ENCODE measurements at regions of chr2 and their contacts with region 1.

Region 1: DNA sequence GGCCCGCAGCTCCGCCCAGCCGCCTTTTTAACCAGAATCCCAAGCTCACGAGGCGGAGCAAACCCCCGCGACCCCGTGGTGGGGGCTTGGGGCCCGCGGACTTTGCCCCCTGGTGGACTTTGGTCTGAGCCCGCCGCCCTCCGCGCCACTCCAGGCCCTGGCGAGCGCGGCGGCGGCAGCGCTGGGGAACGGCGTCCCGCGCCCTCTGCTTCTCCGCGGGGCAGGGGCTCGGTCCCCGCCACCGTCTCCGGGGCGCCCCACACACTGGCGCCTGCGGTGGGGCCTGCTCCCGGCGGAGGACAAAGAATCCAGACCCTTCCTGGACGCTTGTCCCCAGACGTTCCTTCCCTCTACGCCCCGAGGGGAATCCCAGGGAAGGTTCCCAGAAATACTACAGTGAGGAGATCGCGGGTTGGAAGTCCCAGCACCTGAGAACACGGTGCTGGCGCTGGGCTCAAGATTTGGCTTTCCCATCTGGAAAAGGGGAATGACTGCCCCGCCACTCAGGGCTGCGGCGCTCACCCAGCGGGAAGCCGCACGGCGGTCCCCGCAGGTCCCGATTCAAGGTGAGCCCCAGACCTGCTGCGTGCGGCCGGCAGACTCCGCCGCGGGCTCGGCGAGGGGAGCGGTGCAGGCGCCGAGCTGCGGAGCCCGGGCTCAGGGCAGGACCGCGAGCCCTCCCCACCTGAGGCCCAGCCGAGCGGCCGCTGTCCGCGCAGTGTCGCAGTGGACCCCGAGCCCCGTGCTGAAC is at the start of gene HAAO:
- DNase-seq: peak; percentile 44
- H3K4me3 Mint-ChIP-seq: peak within 1 kb of the TSS; percentile 68
- H3K27ac Mint-ChIP-seq: no peak within 1 kb of the TSS
- H3K4me1 Mint-ChIP-seq: peaks cover 8% of the 10 kb centered on the region
- H3K27me3 Mint-ChIP-seq: peaks cover 14% of the 10 kb centered on the region
- CTCF ChIP-seq: peak; percentile 27
- total RNA-seq, gene HAAO: 1.5 and 2.2 TPM in 2 replicates

Region 2: GRCh38 chr2:42775810-42776209 is 16.9 kb before region 1 on chr2:
- CTCF ChIA-PET with region 1: interaction called, 10 read pairs
- intact Hi-C with region 1: no loop called
- DNase-seq: no peak
- H3K4me3 Mint-ChIP-seq: no peak overlapping the region
- H3K27ac Mint-ChIP-seq: no peak overlapping the region
- H3K4me1 Mint-ChIP-seq: no peaks in the 10 kb centered on the region
- H3K27me3 Mint-ChIP-seq: no peaks in the 10 kb centered on the region
- CTCF ChIP-seq: no peak

Region 3: GRCh38 chr2:42810121-42810970 is 17.6 kb after region 1 on chr2:
- CTCF ChIA-PET with region 1: interaction called, 13 read pairs
- intact Hi-C with region 1: no loop called
- DNase-seq: peak; percentile 95
- H3K4me3 Mint-ChIP-seq: peak overlapping the region; percentile 70
- H3K27ac Mint-ChIP-seq: peak overlapping the region; percentile 87
- H3K4me1 Mint-ChIP-seq: no peaks in the 10 kb centered on the region
- H3K27me3 Mint-ChIP-seq: no peaks in the 10 kb centered on the region
- CTCF ChIP-seq: no peak

Region 4: DNA sequence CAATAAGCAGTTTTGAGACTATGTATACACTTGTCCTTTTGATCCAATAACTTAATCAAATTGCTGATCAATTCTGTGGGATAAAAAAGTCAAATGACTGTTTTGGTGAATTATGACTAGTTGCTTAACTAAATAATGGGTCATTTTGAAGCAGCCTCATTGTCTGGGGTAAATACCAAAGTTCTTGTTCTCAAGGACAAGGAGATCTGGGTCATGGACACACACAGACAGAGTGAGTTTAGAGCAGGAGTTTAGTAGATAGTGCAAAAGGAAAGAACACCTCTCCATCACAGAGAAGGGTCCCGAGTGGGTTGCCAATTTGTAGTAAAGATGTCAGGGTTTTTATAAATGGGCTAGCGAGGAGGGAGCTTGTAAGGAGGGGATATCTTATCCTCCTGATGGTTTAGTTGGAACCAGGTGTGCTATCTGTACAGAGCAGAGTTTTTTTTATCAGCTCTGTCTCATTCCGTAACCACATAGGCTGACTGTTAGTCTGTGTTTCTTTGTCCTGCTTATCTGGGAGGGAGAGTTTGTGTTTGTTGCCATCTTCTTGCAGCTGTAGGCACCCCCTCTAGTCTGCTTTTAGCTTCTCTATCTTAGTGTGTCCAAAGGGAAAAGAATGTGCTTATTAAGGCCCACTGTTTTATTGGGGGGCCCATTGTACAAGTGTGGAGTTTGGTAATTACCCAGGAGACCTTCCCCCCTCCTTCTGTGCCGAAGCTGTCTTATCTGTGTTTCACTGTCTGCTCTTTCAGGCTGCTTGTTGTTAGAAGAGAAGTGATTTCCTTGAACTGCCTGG is 932.2 kb after region 1 on chr2:
- CTCF ChIA-PET with region 1: no interaction called
- intact Hi-C with region 1: no loop called
- DNase-seq: no peak
- H3K4me3 Mint-ChIP-seq: no peak overlapping the region
- H3K27ac Mint-ChIP-seq: no peak overlapping the region
- H3K4me1 Mint-ChIP-seq: no peaks in the 10 kb centered on the region
- H3K27me3 Mint-ChIP-seq: no peaks in the 10 kb centered on the region
- CTCF ChIP-seq: no peak

Measured in Calu3 (cell line).